Activated naive CD4-positive, alpha-beta T cell treated with anti-CD3 and anti-CD28 coated beads, Interleukin-2, amount 10 ng/mL, durations not matched to agents 7 days and 5 days (primary cell): ENCODE measurements at regions of chr1 and their contacts with region 1.

Region 1: DNA sequence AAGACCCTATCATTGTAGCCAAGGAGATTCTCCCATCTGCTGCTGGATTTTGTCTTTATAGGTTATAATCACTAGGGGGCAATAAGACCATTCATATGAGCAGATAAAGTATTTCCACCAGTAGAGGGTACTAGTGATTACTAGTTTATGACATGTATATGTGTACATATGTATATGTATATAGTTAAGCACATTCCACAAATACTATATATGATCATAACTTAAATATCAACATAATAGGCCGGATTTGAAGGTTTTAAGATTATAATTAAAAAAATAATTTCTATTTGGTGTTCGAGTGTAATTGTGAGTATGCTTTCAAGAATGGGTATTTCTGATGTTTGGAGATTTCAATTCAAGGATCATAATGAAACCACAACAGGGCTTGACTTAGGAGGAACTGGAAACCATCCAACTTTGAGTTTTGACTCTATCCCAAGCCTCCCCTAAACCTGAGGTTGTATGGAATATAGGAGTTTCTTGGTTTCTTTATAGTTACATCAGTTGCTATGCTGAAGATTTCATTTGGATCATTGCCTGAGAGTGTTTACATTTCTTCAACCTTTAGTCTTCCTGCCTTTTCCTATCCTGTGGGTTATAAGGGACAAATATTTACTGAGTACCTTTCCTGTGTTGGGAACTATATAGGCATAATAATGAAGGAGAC is 16.9 kb downstream of the TCEANC2 start:
- DNase-seq: no peak
- H3K4me3 Mint-ChIP-seq: no peak overlapping the region
- H3K27ac Mint-ChIP-seq: no peak overlapping the region
- H3K4me1 Mint-ChIP-seq: no peaks in the 10 kb centered on the region
- H3K27me3 Mint-ChIP-seq: no peaks in the 10 kb centered on the region

Region 2: GRCh38 chr1:54081306-54082270 is 11.3 kb after region 1 on chr1:
- CTCF ChIA-PET with region 1: interaction called, 10 read pairs
- DNase-seq: peak; percentile 77
- H3K4me3 Mint-ChIP-seq: no peak overlapping the region
- H3K27ac Mint-ChIP-seq: no peak overlapping the region
- H3K4me1 Mint-ChIP-seq: peaks cover 2% of the 10 kb centered on the region
- H3K27me3 Mint-ChIP-seq: no peaks in the 10 kb centered on the region